Activated CD8-positive, alpha-beta T cell treated with anti-CD3 and anti-CD28 coated beads for 36 hours (primary cell): ENCODE measurements at regions of chr3 and their contacts with region 1.

Region 1: GRCh38 chr3:142993958-142994442 is 7.4 kb upstream of the U2SURP start:
- DNase-seq: peak; percentile 81
- ATAC-seq: peak; percentile 68
- H3K4me3 Mint-ChIP-seq: no peak overlapping the region
- H3K27ac Mint-ChIP-seq: no peak overlapping the region
- H3K4me1 Mint-ChIP-seq: peaks cover 2% of the 10 kb centered on the region
- H3K27me3 Mint-ChIP-seq: peaks cover 8% of the 10 kb centered on the region
- CTCF ChIP-seq: peak; percentile 85

Region 2: GRCh38 chr3:142929109-142929508 is 64.9 kb before region 1 on chr3:
- CTCF ChIA-PET with region 1: interaction called, 4 read pairs
- POLR2A ChIA-PET with region 1: no interaction called
- intact Hi-C with region 1: loop called (anchors 5 kb)
- DNase-seq: peak; percentile 69
- ATAC-seq: peak; percentile 77
- H3K4me3 Mint-ChIP-seq: no peak overlapping the region
- H3K27ac Mint-ChIP-seq: no peak overlapping the region
- H3K4me1 Mint-ChIP-seq: no peaks in the 10 kb centered on the region
- H3K27me3 Mint-ChIP-seq: peaks cover 25% of the 10 kb centered on the region
- CTCF ChIP-seq: peak; percentile 53

Region 3: DNA sequence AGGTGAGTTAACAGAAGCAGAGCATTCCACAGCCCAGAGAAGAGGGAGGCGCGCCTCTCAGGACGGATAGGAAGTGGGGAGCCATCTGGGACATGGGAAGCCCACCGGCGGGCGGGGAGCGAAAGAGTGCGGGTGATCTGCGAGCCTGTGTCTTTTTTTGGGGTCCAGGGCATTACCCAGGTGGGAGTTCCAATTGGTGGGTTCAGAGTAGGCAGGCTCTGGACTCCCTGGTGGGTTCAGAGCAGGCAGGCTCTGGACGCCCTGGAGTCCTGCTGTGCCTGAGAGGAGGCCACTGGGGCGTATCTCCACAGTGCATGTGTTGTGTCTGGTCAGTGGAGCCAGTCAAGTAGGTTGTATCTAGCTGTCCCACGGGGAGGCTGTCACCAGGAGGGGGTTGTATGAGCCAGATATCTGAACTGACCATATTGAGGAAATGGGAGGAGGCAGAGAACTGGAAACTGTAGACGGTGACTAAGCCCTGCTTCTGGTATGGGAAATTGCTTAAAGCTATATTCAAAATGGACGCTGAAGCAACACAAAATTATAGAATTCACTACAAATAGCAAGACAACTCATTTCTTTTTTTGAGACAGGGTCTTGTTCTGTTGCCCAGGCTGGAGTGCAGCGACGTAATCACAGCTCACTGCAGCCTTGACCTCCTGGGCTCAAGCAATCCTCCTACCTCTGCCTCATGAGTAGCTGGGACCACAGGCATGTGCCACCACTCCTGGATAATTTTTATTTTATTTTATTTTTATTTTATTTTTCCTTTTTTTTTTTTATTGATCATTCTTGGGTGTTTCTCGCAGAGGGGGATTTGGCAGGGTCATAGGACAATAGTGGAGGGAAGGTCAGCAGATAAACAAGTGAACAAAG is 91.1 kb after region 1 on chr3:
- CTCF ChIA-PET with region 1: no interaction called
- POLR2A ChIA-PET with region 1: no interaction called
- intact Hi-C with region 1: no loop called
- DNase-seq: no peak
- ATAC-seq: peak; percentile 48
- H3K4me3 Mint-ChIP-seq: no peak overlapping the region
- H3K27ac Mint-ChIP-seq: no peak overlapping the region
- H3K4me1 Mint-ChIP-seq: peaks cover 5% of the 10 kb centered on the region
- H3K27me3 Mint-ChIP-seq: no peaks in the 10 kb centered on the region
- CTCF ChIP-seq: no peak